ENCODE measurements at regions of chr7 and their contacts with region 1.

Region 1: DNA sequence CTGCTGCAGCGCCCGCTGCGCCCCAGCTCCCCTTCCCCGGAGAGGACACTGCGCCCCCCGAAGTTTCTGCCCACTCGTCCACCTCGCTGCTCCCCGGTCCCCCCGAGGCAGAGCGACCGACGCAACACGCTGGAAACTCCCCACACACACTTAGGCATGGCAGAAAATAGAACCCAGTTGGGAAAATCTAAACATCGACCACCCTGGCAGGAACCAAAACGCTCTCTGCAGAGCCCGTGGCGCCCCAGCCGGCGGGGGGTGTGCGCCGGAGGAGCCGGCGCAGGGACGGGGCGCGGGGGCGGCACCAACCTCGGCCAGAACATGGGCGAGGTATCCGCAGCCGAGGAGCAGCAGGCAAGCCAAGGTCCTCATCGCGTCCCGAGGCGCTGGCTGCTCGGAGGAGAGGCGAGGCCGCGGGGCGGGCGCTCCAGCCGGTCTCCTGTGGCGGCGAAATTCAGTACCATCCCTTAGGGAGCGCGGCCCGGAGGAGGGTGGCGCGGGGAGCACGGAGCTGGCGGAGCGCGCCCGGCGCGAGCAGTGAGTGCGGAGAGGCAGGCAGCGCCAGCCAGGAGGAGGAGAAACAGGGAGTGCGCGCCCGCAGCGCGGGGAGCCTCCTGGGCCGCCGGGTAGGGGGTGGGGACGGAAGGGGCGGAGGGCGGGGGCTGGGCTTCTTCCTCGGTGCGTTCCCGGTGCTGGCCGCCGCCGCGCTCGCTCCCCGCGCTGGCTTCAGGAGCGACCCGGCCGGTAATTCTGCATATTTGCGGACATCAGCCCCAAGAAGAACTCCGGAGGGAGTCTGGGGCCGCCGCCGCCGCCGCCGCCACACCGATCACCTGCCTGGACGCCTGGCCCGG is 789 bp downstream of the PDGFA start:
- DNase-seq: peak; percentile 84 to 86
- ATAC-seq: peak; percentile 50 to 66 (median 59)
- H3K4me3 ChIP-seq: peak overlapping the region; percentile 56 to 95 (median 75)
- H3K27ac ChIP-seq: peak overlapping the region; percentile 83 to 95 (median 90)
- H3K4me1 ChIP-seq: peaks cover 30 to 74% (median 61%) of the 10 kb centered on the region in 9 donors
- H3K27me3 ChIP-seq: peaks cover 0 to 80% (median 26%) of the 10 kb centered on the region in 7 donors
- CTCF ChIP-seq: peak in 2 of 9 donors; percentile 15 to 17

Region 2: GRCh38 chr7:332646-333392 is 186.0 kb before region 1 on chr7:
- intact Hi-C with region 1: loop called in 7 of 10 experiments (anchors 2 to 10 kb)
- DNase-seq: peak; percentile 75 to 86
- ATAC-seq: peak; percentile 86 to 94 (median 90)
- H3K4me3 ChIP-seq: peak overlapping the region in 9 of 10 donors; percentile 37 to 56 (median 50)
- H3K27ac ChIP-seq: peak overlapping the region; percentile 24 to 85 (median 76)
- H3K4me1 ChIP-seq: peaks cover 4 to 17% (median 12%) of the 10 kb centered on the region in 9 donors
- H3K27me3 ChIP-seq: peaks cover 0 to 15% (median 4%) of the 10 kb centered on the region in 7 donors
- CTCF ChIP-seq: peak; percentile 78 to 95 (median 91)

Region 3: DNA sequence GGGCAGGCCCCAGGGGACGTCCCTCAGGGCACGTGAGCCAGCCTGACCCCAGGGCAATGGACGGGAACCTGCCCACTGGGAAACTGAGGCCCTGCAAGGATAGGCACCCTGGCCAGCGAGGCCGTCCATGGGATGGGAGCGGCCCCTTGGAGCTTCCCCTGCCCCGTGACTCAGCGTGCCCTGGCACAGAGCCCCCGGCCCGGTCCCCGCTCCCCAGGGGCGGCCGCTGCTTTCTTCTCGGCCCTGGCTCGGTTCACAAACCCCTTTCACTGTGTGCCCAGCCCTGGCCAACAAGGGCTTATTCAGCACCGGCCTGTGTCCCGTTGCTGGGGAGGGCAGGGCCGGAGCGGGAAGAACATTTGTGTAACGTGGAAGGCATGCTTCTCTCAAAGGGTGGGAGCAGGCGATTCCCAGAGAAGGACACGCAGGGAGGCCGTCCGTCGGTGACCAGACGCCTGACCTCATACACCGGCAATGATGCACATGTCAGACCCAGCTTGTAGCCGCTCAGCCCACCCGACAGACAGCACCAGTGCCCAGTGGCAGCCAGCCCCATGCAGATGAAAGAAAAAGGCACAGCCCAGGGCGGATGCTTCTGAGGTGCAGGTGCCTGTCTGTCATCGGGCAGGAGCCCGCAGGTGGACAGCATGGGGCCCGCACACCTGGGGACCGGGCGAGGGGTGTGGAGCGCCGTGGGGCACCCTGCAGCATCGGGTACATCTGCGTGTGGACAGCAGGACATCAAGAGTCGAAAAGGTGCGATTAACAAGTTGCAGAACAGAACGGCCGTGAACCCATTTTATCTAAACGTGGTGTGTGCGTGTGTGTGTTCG is 93.7 kb before region 1 on chr7:
- intact Hi-C with region 1: no loop called
- DNase-seq: no peak
- ATAC-seq: peak in 7 of 8 donors; percentile 15 to 43 (median 29)
- H3K4me3 ChIP-seq: no peak overlapping the region
- H3K27ac ChIP-seq: no peak overlapping the region
- H3K4me1 ChIP-seq: peaks cover 0 to 14% (median 8%) of the 10 kb centered on the region in 9 donors
- H3K27me3 ChIP-seq: peaks cover 0 to 21% (median 0%) of the 10 kb centered on the region in 7 donors
- CTCF ChIP-seq: no peak

Region 4: GRCh38 chr7:657565-658119 is 138.8 kb after region 1 on chr7:
- intact Hi-C with region 1: loop called in 2 of 10 experiments (anchors 5 to 10 kb)
- DNase-seq: no peak
- ATAC-seq: peak; percentile 78 to 97 (median 88)
- H3K4me3 ChIP-seq: peak overlapping the region in 1 of 10 donors; percentile 13
- H3K27ac ChIP-seq: peak overlapping the region in 9 of 10 donors; percentile 29 to 84 (median 73)
- H3K4me1 ChIP-seq: peaks cover 0 to 19% (median 6%) of the 10 kb centered on the region in 9 donors
- H3K27me3 ChIP-seq: no peaks in the 10 kb centered on the region
- CTCF ChIP-seq: no peak

Region 5: GRCh38 chr7:726084-726853 is 207.4 kb after region 1 on chr7 and contains the start of gene DNAAF5:
- intact Hi-C with region 1: loop called in 7 of 10 experiments (anchors 5 to 10 kb)
- DNase-seq: peak; percentile 87 to 88
- ATAC-seq: peak; percentile 87 to 94 (median 90)
- H3K4me3 ChIP-seq: peak within 1 kb of the TSS; percentile 50 to 96 (median 66)
- H3K27ac ChIP-seq: peak within 1 kb of the TSS in 9 of 10 donors; percentile 73 to 86 (median 78)
- H3K4me1 ChIP-seq: peaks cover 4 to 36% (median 24%) of the 10 kb centered on the region in 9 donors
- H3K27me3 ChIP-seq: no peaks in the 10 kb centered on the region
- CTCF ChIP-seq: peak in 1 of 9 donors; percentile 8
- total RNA-seq, gene DNAAF5: 18.0 to 30.0 (median 25.3) TPM

Region 6: DNA sequence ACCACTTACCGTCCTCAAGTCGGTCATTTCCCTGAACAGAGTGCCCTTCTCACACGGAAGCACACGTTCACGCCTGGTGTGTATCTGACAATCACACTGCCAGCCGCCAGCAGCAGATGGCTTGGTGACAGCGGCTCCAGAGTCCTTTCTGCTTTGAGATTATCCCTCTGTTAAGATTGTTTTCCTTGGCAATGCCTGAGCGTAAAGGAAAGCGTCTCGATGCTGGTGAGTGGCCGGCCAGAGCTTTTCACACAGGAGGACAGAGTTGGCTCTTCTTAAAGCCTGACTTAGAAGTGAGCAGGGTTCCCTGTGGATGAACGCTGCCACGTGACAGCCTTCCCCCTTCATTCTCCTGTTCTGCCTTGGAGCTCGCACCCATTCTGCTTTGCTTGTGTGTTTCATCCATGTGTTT is 230.3 kb after region 1 on chr7:
- intact Hi-C with region 1: loop called in 1 of 10 experiments (anchors 5 kb)
- DNase-seq: no peak
- ATAC-seq: peak; percentile 60 to 83 (median 74)
- H3K4me3 ChIP-seq: no peak overlapping the region
- H3K27ac ChIP-seq: peak overlapping the region in 9 of 10 donors; percentile 7 to 77 (median 55)
- H3K4me1 ChIP-seq: peaks cover 0 to 29% (median 20%) of the 10 kb centered on the region in 9 donors
- H3K27me3 ChIP-seq: no peaks in the 10 kb centered on the region
- CTCF ChIP-seq: no peak